Activated T-helper 1 cell treated with anti-CD3 and anti-CD28 coated beads, Interleukin-12 subunit alpha, Interleukin-12 subunit beta, Interleukin-2, Interleukin-4 antibody, amounts not matched to agents 30 ng/mL and 10 ng/mL and 1 ng/mL, durations not matched to agents 14 hours and 24 hours and 36 hours (primary cell): ENCODE measurements at regions of chr3 and their contacts with region 1.

Region 1: DNA sequence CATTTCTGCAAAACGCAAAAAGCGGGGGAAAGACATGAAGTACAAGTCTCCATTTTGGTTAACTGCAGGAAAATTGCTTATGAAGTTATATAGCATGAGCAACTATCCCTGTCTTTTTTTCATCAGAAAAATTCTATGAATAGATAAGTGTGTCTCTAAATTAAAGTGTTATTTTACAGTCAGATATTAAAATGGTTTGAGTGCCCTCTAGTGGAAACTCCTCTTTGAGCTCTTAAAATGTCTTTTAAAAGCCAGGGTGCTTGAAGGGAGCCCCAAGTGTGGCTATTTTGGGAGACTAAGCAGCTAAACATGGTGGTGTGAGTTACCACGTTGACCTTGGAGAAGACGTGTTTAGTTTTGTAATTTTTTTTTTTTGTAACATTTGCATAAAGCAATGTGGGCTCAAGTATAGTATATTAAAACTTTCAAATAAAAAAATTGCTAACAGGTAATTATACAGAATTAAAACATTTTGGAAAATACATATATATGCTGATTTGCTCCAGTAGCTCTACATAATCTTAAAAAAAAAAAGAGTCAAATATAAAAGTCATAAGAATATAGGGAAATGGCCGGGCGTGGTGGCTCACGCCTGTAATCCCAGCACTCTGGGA is 77.2 kb downstream of the PPP2R3A start:
- DNase-seq: no peak
- H3K4me3 Mint-ChIP-seq: no peak overlapping the region
- H3K27ac Mint-ChIP-seq: no peak overlapping the region
- H3K4me1 Mint-ChIP-seq: no peaks in the 10 kb centered on the region
- H3K27me3 Mint-ChIP-seq: peaks cover 7% of the 10 kb centered on the region

Region 2: GRCh38 chr3:135895106-135895733 is 147.5 kb before region 1 on chr3:
- intact Hi-C with region 1: loop called (anchors 10 kb)
- DNase-seq: no peak
- H3K4me3 Mint-ChIP-seq: no peak overlapping the region
- H3K27ac Mint-ChIP-seq: no peak overlapping the region
- H3K4me1 Mint-ChIP-seq: no peaks in the 10 kb centered on the region
- H3K27me3 Mint-ChIP-seq: peaks cover 4% of the 10 kb centered on the region

Region 3: GRCh38 chr3:135918580-135918962 is 124.1 kb before region 1 on chr3:
- intact Hi-C with region 1: loop called (anchors 2 kb)
- DNase-seq: no peak
- H3K4me3 Mint-ChIP-seq: no peak overlapping the region
- H3K27ac Mint-ChIP-seq: no peak overlapping the region
- H3K4me1 Mint-ChIP-seq: no peaks in the 10 kb centered on the region
- H3K27me3 Mint-ChIP-seq: peaks cover 8% of the 10 kb centered on the region

Region 4: DNA sequence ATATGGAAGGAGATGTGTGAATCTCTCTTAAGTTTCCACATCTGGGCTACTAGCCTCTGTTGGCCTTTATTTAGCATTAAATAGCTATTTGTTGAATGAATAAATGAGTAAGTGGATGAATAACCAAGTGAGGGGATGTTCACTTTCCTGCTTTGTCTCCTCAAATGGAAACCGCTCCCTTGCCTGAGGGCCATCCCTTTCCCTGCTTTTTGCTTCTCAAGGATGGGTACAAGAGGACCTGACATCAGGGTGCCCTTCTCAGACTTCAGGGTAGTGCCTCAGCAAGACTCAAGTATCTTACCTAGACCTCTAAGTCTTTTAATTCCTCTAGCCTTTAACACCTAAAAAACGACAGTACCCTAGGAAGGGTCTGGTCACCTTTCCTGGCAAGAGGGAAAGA is 35.5 kb before region 1 on chr3:
- intact Hi-C with region 1: no loop called
- DNase-seq: no peak
- H3K4me3 Mint-ChIP-seq: no peak overlapping the region
- H3K27ac Mint-ChIP-seq: no peak overlapping the region
- H3K4me1 Mint-ChIP-seq: no peaks in the 10 kb centered on the region
- H3K27me3 Mint-ChIP-seq: peaks cover 3% of the 10 kb centered on the region

Region 5: DNA sequence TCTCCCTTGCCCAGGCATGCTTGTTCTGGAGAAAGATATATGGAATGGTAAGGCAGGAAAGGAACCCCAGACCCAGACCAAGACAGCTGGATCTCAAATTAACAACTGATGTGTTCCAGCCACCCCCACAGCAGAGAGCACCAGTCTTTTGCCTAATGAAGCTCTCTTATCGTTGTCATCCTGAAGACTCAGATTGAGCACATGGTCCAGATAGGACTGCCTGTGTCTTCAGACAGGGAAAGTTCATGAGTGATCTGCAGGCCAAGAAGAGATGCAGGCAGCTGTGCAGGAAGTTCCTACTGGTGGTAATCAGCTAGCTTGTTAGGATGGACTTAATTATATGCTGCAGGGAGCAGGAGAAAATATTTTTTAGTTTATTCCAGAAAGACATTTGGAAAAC is 23.8 kb before region 1 on chr3:
- intact Hi-C with region 1: no loop called
- DNase-seq: no peak
- H3K4me3 Mint-ChIP-seq: no peak overlapping the region
- H3K27ac Mint-ChIP-seq: no peak overlapping the region
- H3K4me1 Mint-ChIP-seq: no peaks in the 10 kb centered on the region
- H3K27me3 Mint-ChIP-seq: peaks cover 6% of the 10 kb centered on the region

Region 6: GRCh38 chr3:136456196-136456595 is 413.5 kb after region 1 on chr3:
- intact Hi-C with region 1: no loop called
- DNase-seq: no peak
- H3K4me3 Mint-ChIP-seq: no peak overlapping the region
- H3K27ac Mint-ChIP-seq: no peak overlapping the region
- H3K4me1 Mint-ChIP-seq: no peaks in the 10 kb centered on the region
- H3K27me3 Mint-ChIP-seq: no peaks in the 10 kb centered on the region